Esophagus muscularis mucosa (tissue), 4 donors: ENCODE measurements at regions of chr10 and their contacts with region 1.

Region 1: GRCh38 chr10:119199231-119199992 is 8.0 kb upstream of the GRK5 start:
- DNase-seq: no peak
- H3K4me3 ChIP-seq: no peak overlapping the region
- H3K27ac ChIP-seq: no peak overlapping the region
- H3K4me1 ChIP-seq: peaks cover 0 to 11% (median 5%) of the 10 kb centered on the region in 4 donors
- H3K27me3 ChIP-seq: no peaks in the 10 kb centered on the region
- CTCF ChIP-seq: peak; percentile 67 to 85 (median 79)
- EP300 ChIP-seq: no peak
- POLR2A ChIP-seq: no peak

Region 2: DNA sequence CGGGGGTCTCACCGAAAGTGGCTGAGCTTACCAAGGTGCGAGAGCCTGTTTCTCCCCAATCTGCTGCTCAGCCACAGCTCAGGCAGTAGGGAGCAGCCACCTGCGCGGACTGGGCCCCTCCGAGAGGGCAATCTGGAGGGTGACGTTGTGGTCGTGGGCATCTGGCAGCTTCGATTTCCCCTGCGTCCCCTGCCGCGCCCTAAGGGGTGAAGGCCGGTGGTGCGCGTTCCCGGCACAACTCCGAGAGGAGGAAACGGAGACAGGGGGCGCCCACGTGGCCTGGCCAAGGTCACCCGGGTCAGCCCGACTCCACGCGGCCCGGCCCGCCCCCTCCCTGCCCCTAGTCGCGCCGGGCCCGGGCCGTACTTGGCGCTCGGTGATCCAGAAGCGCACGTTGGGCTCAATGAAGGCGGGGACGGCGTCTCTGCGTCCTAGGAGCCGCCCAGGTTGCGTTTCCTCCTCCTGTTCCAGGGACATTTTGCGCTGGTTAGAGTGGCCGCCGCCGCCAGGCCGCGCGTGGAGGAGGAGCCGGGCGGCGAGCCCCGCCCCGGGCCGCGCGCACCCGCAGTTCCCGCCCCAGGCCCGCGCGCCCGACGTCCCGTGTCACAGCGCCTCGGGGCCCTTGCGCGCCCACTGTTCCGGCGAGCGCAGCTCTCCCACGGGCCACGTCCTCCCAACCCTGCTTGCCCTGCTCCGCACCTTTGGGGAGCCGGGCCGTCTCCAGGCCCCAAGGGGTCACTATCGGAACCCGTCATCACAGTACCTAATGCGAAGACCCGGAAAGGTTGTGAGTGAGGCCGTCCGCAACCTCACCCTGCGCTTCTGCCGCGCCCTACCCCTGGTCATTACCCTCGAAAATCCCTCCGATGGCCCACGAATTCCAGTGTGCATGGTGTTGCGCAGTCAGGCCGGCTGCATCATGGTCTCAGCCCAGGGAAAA is 34.0 kb before region 1 on chr10 and contains the start of gene SFXN4:
- intact Hi-C with region 1: no loop called
- DNase-seq: peak; percentile 94
- H3K4me3 ChIP-seq: peak within 1 kb of the TSS; percentile 70 to 84 (median 78)
- H3K27ac ChIP-seq: peak within 1 kb of the TSS; percentile 88 to 93 (median 92)
- H3K4me1 ChIP-seq: peaks cover 12 to 36% (median 30%) of the 10 kb centered on the region in 4 donors
- H3K27me3 ChIP-seq: no peaks in the 10 kb centered on the region
- CTCF ChIP-seq: peak in 2 of 3 experiments; percentile 9 to 12
- EP300 ChIP-seq: no peak
- POLR2A ChIP-seq: peak; percentile 70
- total RNA-seq, gene SFXN4: 14.1 to 39.9 (median 17.8) TPM

Region 3: GRCh38 chr10:119235356-119235755 is 35.9 kb after region 1 on chr10:
- intact Hi-C with region 1: no loop called
- DNase-seq: no peak
- H3K4me3 ChIP-seq: no peak overlapping the region
- H3K27ac ChIP-seq: peak overlapping the region; percentile 48 to 68 (median 58)
- H3K4me1 ChIP-seq: peaks cover 54 to 74% (median 70%) of the 10 kb centered on the region in 4 donors
- H3K27me3 ChIP-seq: no peaks in the 10 kb centered on the region
- CTCF ChIP-seq: no peak
- EP300 ChIP-seq: no peak
- POLR2A ChIP-seq: no peak

Region 4: GRCh38 chr10:119391440-119392251 is 192.2 kb after region 1 on chr10:
- intact Hi-C with region 1: no loop called
- DNase-seq: no peak
- H3K4me3 ChIP-seq: no peak overlapping the region
- H3K27ac ChIP-seq: peak overlapping the region in 3 of 4 donors; percentile 13 to 51 (median 39)
- H3K4me1 ChIP-seq: peaks cover 32 to 42% (median 41%) of the 10 kb centered on the region in 4 donors
- H3K27me3 ChIP-seq: no peaks in the 10 kb centered on the region
- CTCF ChIP-seq: no peak
- EP300 ChIP-seq: no peak
- POLR2A ChIP-seq: no peak

Region 5: GRCh38 chr10:119445311-119445934 is 246.0 kb after region 1 on chr10:
- intact Hi-C with region 1: loop called (anchors 1 kb)
- DNase-seq: peak; percentile 95
- H3K4me3 ChIP-seq: no peak overlapping the region
- H3K27ac ChIP-seq: peak overlapping the region in 1 of 4 donors; percentile 30
- H3K4me1 ChIP-seq: peaks cover 18 to 36% (median 30%) of the 10 kb centered on the region in 4 donors
- H3K27me3 ChIP-seq: no peaks in the 10 kb centered on the region
- CTCF ChIP-seq: peak; percentile 91 to 98 (median 98)
- EP300 ChIP-seq: no peak
- POLR2A ChIP-seq: no peak

Region 6: DNA sequence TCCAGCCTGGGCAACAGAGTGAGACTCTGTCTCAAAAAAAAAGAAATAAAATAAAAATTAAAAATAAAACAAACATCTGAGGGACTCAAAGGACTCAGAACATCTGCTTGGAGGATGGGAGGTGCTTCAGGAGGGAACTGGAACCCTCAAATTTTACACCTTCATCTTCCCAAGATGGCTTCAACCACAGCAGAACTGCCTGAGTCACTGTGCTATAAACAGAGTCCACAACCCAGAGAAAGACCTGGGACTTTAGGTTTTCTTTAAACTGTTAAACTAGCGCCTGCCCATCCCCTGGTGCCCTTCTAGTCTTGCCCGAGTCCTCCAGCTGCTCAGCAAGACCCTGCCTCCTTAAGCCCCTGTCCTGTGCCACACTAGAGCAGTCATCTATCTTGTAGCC is 302.3 kb after region 1 on chr10:
- intact Hi-C with region 1: loop called (anchors 2 kb)
- DNase-seq: no peak
- H3K4me3 ChIP-seq: no peak overlapping the region
- H3K27ac ChIP-seq: no peak overlapping the region
- H3K4me1 ChIP-seq: peaks cover 0 to 43% (median 31%) of the 10 kb centered on the region in 4 donors
- H3K27me3 ChIP-seq: no peaks in the 10 kb centered on the region
- CTCF ChIP-seq: no peak
- EP300 ChIP-seq: no peak
- POLR2A ChIP-seq: no peak

Region 7: DNA sequence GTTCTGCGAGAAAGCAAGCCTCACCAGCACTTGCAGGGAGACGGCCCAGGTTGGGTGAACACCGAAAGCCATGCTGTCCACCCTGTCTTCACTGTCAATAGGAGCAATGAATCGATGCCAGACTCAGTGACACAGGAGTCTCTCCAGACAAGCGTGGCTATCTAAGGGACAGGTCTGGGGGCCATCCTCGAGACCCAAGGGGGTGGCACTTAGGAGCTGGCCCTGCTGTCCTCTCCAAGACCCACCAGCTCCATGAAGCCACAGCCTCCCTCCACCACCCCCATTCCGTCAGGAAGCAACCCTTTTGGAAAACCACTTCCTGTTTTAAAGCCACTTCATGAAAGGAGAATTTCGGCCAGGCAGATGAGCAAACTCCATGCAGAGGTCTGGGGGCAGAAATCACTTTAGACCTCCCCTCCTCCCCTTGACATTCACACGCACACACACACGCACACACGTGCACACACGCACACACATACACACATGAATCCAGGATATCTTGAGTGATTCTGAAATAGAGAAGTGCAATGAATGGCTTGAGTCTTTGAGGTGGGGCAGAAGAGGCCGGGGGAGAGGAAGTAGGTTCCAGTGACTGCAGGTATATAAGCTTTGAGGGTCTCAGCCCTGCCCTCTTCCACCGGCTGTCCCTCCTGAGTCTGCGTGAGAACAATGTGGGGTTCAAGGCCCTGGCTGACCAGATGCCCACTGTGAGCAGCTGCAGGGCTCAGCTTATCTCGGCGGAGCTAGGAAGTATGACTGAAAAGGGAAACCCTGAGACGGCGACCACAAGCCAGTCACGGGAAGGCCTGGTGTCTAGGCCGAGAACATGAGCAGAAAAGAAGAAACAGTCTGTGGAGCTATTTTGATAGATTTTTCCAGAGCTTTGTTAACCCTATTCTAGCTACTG is 318.1 kb after region 1 on chr10:
- intact Hi-C with region 1: no loop called
- DNase-seq: no peak
- H3K4me3 ChIP-seq: no peak overlapping the region
- H3K27ac ChIP-seq: peak overlapping the region in 2 of 4 donors; percentile 22 to 34
- H3K4me1 ChIP-seq: peaks cover 0 to 23% (median 15%) of the 10 kb centered on the region in 4 donors
- H3K27me3 ChIP-seq: no peaks in the 10 kb centered on the region
- CTCF ChIP-seq: no peak
- EP300 ChIP-seq: no peak
- POLR2A ChIP-seq: no peak